ENCODE measurements at regions of chr18 and their contacts with region 1.

Region 1: DNA sequence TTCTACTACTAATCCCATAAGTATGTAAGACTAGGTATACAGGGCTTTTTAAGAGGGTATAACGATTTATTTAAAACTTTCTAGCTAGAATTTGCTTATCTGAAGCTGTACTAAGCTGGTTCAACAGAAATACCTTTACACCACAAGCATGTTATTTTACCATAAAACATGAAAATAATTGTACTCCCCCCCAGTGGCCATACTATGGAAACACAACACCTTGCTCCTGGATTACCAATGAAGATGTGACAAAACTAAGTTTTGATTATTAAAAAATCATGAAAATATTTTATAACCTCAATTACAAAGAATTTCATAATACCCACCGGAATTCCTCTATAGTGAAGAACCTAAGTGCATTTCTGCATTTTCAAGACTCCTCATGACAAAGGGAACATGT is 27.3 kb downstream of the LPIN2 start:
- DNase-seq: no peak
- H3K4me3 ChIP-seq: no peak overlapping the region
- H3K27ac ChIP-seq: peak overlapping the region; percentile 12; the same call in 1 of the 2 replicates
- H3K4me1 ChIP-seq: peaks cover 61% of the 10 kb centered on the region
- H3K27me3 ChIP-seq: no peaks in the 10 kb centered on the region
- CTCF ChIP-seq: peak; percentile 70

Region 2: DNA sequence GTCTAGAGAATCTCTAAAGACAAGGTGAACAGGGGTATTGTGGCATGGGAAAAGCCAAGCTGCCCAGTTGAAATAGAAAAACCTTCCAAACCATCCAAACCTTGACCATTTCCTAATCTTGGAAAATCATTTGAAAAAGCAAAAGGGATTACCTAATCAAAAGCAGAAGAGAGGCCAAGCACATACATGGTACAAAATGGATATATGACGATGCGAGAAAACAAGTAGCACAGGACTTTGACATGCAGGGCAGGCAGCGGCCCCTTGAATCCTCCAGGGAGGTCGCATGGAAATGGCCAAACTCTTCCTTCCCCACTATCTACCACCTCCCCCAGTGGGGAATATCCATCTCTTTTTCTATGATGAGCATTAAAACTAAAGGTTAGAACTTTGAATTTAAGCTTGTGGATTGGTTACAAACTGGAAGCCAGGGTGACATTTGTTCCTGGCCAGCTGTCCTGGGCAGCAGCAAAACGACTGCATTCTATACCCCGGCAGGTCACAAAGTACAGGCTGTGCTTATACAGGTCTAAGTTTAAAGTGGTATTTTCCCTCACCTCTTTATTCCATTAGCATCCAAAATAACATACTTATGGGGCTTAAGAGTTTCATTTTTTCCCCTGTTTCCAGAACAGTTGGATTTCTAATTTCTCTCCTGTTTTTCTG is 209.5 kb after region 1 on chr18:
- CTCF ChIA-PET with region 1: interaction called, 10 read pairs
- POLR2A ChIA-PET with region 1: no interaction called
- intact Hi-C with region 1: no loop called
- DNase-seq: no peak
- H3K4me3 ChIP-seq: no peak overlapping the region
- H3K27ac ChIP-seq: no peak overlapping the region
- H3K4me1 ChIP-seq: no peaks in the 10 kb centered on the region
- H3K27me3 ChIP-seq: no peaks in the 10 kb centered on the region
- CTCF ChIP-seq: no peak

Measured in PC-9 (cell line).